Activated T-helper 1 cell treated with anti-CD3 and anti-CD28 coated beads, Interleukin-12 subunit alpha, Interleukin-12 subunit beta, Interleukin-2, Interleukin-4 antibody, amounts not matched to agents 30 ng/mL and 10 ng/mL and 1 ng/mL, durations not matched to agents 14 hours and 24 hours and 36 hours (primary cell): ENCODE measurements at regions of chr2 and their contacts with region 1.

Region 1: DNA sequence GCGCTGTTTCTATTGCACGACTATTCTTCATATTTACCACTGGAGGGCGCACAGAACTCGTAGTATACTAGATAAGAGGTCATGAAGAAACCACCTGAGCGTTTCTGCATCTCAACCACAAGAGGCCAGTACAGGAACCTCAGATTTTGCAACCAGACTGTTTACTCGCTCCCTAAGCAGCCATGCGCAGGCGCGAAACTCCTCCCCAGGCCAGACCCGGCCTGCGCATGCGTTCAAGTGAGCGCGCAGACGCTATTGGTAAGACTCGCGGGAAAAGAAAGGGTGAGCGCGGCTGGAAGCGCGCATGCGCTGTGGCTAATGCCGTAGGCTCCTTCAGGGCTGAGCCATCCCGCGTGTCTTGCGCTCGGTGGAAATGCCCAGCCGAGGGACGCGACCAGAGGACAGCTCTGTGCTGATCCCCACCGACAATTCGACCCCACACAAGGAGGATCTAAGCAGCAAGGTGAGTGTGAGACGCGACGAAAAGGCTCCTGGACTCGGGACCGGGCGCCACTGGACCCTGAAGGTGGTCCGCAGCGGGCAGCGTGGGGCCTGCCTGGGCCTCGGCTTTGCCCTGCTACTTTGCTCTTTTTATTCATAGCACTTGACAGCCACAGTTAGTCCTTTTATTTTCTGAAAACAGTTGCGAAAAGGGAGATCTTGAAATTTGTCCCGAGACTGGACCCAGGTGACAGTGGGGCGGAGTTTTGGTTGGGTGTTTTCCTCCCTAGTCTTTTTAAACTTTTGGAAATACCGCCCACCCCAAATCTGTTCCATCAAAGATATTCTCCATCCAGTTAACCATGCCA is at the start of gene ASNSD1:
- DNase-seq: peak; percentile 99
- H3K4me3 Mint-ChIP-seq: no peak within 1 kb of the TSS
- H3K27ac Mint-ChIP-seq: no peak within 1 kb of the TSS
- H3K4me1 Mint-ChIP-seq: peaks cover 48% of the 10 kb centered on the region
- H3K27me3 Mint-ChIP-seq: no peaks in the 10 kb centered on the region
- total RNA-seq, gene ASNSD1: 58.4 and 61.2 TPM in 2 replicates

Region 2: GRCh38 chr2:189580658-189581353 is 80.5 kb before region 1 on chr2 and contains the start of gene SLC40A1:
- intact Hi-C with region 1: loop called (anchors 1 kb)
- DNase-seq: peak; percentile 58
- H3K4me3 Mint-ChIP-seq: peak within 1 kb of the TSS; percentile 84
- H3K27ac Mint-ChIP-seq: no peak within 1 kb of the TSS
- H3K4me1 Mint-ChIP-seq: peaks cover 15% of the 10 kb centered on the region
- H3K27me3 Mint-ChIP-seq: peaks cover 40% of the 10 kb centered on the region
- total RNA-seq, gene SLC40A1: 0.86 and 1.2 TPM in 2 replicates

Region 3: GRCh38 chr2:189674374-189675112 is 13.2 kb after region 1 on chr2 and contains the start of gene ANKAR:
- intact Hi-C with region 1: loop called (anchors 1 kb)
- DNase-seq: peak; percentile 71
- H3K4me3 Mint-ChIP-seq: peak within 1 kb of the TSS; percentile 88
- H3K27ac Mint-ChIP-seq: peak within 1 kb of the TSS; percentile 91
- H3K4me1 Mint-ChIP-seq: peaks cover 23% of the 10 kb centered on the region
- H3K27me3 Mint-ChIP-seq: no peaks in the 10 kb centered on the region
- total RNA-seq, gene ANKAR: 4.2 and 5.8 TPM in 2 replicates

Region 4: DNA sequence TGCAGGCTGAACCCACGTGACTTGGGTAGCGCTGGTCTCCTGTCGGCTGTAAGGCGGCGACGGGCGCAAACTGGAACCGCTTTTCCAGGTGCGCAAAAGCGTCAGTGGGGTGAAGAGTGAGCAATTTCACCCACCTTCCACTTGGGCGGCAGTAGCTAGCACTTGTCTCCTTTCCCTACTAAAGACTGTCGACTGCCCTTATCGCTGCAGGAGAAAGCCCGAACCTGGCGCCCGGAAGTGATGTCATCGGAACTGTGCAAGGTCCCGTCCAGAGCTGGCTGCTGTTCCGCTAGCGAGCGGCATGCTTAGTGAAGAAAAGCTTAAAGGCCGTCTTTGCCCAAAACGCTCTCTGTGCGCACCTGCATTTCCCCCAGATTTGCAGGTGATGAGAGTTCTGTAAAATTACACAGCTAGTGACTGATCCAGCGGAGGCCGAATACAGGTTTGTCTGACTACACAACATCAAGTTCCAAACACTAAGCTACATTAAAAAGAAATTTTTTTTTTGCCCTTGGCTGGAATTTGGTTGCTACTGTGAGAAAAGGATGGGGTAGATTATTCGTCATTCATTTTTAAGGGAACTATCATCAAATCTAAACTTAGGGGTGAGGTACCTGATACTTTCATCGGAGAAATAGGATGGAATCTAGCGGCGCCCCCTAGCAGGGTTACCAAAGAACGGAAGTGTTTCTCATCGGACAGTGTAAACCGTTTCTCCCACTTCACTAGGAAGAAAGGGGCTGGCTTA is 101.4 kb after region 1 on chr2 and contains the start of gene OSGEPL1:
- intact Hi-C with region 1: loop called (anchors 1 kb)
- DNase-seq: peak; percentile 88
- H3K4me3 Mint-ChIP-seq: peak within 1 kb of the TSS; percentile 92
- H3K27ac Mint-ChIP-seq: peak within 1 kb of the TSS; percentile 99
- H3K4me1 Mint-ChIP-seq: peaks cover 14% of the 10 kb centered on the region
- H3K27me3 Mint-ChIP-seq: no peaks in the 10 kb centered on the region
- total RNA-seq, gene OSGEPL1: 8.3 and 11.4 TPM in 2 replicates

Region 5: DNA sequence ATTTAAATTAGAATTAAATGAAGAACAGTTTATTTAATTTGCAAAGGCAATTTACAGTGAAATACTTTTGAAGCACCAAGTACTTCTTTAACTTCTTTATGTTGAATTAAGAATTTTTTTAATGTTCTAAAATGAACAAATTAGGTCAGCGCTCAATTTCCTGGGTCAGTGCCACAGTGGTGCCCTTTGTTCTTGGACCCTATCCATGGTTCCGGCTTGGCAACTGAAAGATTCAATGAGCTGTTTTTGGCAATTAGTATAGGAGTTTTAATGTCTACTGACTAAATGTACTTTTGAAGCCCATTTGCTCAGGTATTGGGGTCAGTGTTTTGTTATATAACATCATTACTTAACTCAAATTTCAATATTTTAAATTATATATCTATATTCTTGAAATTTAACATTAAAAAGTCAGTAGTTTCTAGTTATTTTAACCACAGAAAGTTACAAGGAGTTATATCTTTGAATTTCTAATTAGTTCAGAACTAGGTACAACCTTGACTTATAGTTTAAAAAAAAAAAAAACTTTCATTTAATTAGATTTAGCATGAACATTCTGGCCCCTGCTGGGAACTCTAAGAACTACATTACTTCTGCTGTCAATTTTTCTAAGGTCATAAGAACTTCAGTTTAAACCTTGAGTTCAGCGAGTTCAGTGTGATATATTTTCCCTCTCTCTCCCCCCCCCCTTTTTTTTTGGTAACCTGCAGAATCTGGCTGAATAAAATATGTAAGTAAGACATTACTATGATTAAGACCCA is 408.8 kb after region 1 on chr2:
- intact Hi-C with region 1: loop called (anchors 1 kb)
- DNase-seq: no peak
- H3K4me3 Mint-ChIP-seq: no peak overlapping the region
- H3K27ac Mint-ChIP-seq: no peak overlapping the region
- H3K4me1 Mint-ChIP-seq: no peaks in the 10 kb centered on the region
- H3K27me3 Mint-ChIP-seq: peaks cover 8% of the 10 kb centered on the region

Region 6: DNA sequence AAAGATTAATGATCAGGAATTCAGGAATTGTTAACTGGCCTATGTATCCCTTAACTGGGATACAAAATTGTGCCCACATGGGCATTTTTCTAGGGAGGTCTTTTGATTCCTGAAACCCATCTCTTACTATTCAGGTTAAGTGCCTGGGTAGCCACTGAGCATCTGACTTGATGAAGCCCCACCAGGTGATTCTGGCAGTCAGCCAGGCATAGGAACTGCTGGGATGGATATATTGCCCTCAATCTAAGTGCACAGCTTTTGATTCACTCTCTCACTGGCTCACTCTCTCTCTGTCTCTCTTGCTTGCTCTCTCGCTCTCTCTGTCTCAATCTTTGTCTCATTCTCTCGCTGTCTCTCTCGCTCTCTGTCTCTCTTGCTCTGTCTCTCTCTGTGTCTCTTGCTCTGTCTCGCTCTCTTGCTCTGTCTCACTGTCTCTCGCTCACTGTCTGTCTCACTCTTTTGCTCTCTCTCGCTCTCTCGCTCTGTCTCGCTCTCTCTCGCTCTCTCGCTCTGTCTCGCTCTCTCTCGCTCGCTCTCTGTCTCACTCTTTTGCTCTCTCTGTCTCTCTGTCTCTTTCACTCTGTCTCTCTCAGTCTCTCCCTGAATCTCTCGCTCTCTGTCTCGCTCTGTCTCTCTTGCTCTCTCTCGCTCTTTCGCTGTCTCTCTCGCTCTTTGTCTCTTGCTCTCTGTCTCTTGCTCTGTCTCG is 704.3 kb after region 1 on chr2:
- intact Hi-C with region 1: no loop called
- DNase-seq: no peak
- H3K4me3 Mint-ChIP-seq: no peak overlapping the region
- H3K27ac Mint-ChIP-seq: no peak overlapping the region
- H3K4me1 Mint-ChIP-seq: peaks cover 14% of the 10 kb centered on the region
- H3K27me3 Mint-ChIP-seq: no peaks in the 10 kb centered on the region

Region 7: GRCh38 chr2:190534310-190535120 is 873.2 kb after region 1 on chr2 and contains the start of gene NEMP2:
- intact Hi-C with region 1: loop called (anchors 5 kb)
- DNase-seq: peak; percentile 82
- H3K4me3 Mint-ChIP-seq: peak within 1 kb of the TSS; percentile 95
- H3K27ac Mint-ChIP-seq: peak within 1 kb of the TSS; percentile 99
- H3K4me1 Mint-ChIP-seq: peaks cover 57% of the 10 kb centered on the region
- H3K27me3 Mint-ChIP-seq: no peaks in the 10 kb centered on the region
- total RNA-seq, gene NEMP2: 11.7 and 13.6 TPM in 2 replicates